GM13976 (cell line): ENCODE measurements at regions of chr19 and their contacts with region 1.

Region 1: GRCh38 chr19:18058208-18059030 is 28.3 kb downstream of the IL12RB1 start:
- DNase-seq: peak; percentile 93
- CTCF ChIP-seq: peak; percentile 78

Region 2: GRCh38 chr19:17932485-17933338 is 125.7 kb before region 1 on chr19 and contains the start of gene CCDC124:
- in situ Hi-C with region 1: loop called (anchors 25 kb)
- DNase-seq: peak; percentile 94
- CTCF ChIP-seq: peak; percentile 96

Region 3: GRCh38 chr19:18017275-18018083 is 40.9 kb before region 1 on chr19:
- in situ Hi-C with region 1: loop called (anchors 5 kb)
- DNase-seq: no peak
- CTCF ChIP-seq: no peak